T-cell (primary cell): ENCODE measurements at regions of chr13 and their contacts with region 1.

Region 1: GRCh38 chr13:95880331-95880730 is 172.9 kb downstream of the UGGT2 start:
- DNase-seq: no peak
- ATAC-seq: no peak
- H3K4me3 ChIP-seq: no peak overlapping the region
- H3K4me3 Mint-ChIP-seq: no peak overlapping the region
- H3K27ac ChIP-seq: no peak overlapping the region
- H3K27ac Mint-ChIP-seq: no peak overlapping the region
- H3K4me1 ChIP-seq: no peaks in the 10 kb centered on the region
- H3K4me1 Mint-ChIP-seq: no peaks in the 10 kb centered on the region
- H3K27me3 ChIP-seq: peaks cover 0 to 6% of the 10 kb centered on the region in 2 experiments
- H3K27me3 Mint-ChIP-seq: peaks cover 1 to 7% of the 10 kb centered on the region in 2 donors

Region 2: DNA sequence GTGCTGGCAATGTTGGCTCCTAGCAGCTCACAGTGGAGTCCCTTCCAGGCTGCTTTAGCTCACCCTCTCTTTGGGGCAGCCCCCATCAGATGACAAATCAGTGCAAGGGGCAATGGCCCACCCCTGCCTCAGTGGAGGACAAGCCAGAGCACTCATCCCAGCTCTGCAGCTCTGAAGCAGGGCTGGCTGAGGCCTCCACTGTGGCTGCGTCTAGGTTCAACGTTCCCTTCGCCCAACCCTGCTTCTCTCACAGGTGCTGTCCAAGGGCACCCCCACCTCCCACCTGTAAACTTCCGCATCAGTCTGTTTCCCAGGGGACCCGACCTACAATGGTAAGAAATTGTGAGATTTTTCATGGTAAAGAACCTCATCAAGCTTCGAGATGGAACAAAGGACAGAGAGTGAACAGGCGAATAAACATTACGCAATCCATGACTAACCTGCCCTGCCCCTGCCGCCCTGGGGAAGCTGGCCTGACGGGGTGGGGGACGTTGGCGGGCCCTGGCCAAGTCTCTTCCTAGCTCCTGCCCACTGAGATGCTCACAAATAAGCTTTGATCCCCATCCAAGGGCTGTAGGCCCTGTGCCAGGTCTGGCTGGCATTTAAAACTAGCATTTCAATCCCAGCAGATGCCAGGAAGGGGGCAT is 276.3 kb before region 1 on chr13:
- CTCF ChIA-PET with region 1: no interaction called
- POLR2A ChIA-PET with region 1: interaction called in 1 of 2 experiments, 15 read pairs
- DNase-seq: no peak
- ATAC-seq: no peak
- H3K4me3 ChIP-seq: no peak overlapping the region
- H3K4me3 Mint-ChIP-seq: no peak overlapping the region
- H3K27ac ChIP-seq: no peak overlapping the region
- H3K27ac Mint-ChIP-seq: no peak overlapping the region
- H3K4me1 ChIP-seq: no peaks in the 10 kb centered on the region
- H3K4me1 Mint-ChIP-seq: no peaks in the 10 kb centered on the region
- H3K27me3 ChIP-seq: peaks cover 0 to 18% of the 10 kb centered on the region in 2 experiments
- H3K27me3 Mint-ChIP-seq: peaks cover 14 to 19% of the 10 kb centered on the region in 2 donors